Mammary epithelial cell (primary cell): ENCODE measurements at regions of chr1 and their contacts with region 1.

Region 1: DNA sequence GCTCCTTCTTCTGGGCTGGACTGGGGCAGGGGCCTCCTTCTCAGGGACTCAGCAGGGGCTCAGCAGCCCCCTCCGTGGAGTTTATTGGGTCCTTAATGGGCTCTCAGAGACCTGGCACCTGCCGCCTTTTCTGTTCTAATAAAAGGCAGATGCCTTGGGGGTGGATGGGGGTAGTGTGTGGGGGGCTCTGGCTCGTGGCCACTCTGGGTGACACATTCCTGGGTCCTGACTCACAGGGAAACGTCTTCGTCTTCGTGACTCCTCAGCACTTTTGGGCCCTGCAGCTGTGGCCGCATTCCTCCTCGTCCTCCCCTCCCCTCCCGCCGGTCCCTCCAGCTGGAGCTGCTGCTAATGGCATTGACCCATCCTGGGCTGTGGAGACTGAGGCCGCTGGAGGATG is 107.8 kb upstream of the WNT4 start:
- DNase-seq: no peak
- H3K4me3 ChIP-seq: no peak overlapping the region
- H3K27ac ChIP-seq: no peak overlapping the region
- H3K4me1 ChIP-seq: peaks cover 6% of the 10 kb centered on the region
- H3K27me3 ChIP-seq: peaks cover 4% of the 10 kb centered on the region
- CTCF ChIP-seq: no peak

Region 2: GRCh38 chr1:22195802-22196440 is 54.8 kb before region 1 on chr1:
- CTCF ChIA-PET with region 1: no interaction called
- dilution Hi-C with region 1: loop called (anchors 10 kb)
- in situ Hi-C with region 1: no loop called
- intact Hi-C with region 1: no loop called
- DNase-seq: no peak
- H3K4me3 ChIP-seq: no peak overlapping the region
- H3K27ac ChIP-seq: no peak overlapping the region
- H3K4me1 ChIP-seq: no peaks in the 10 kb centered on the region
- H3K27me3 ChIP-seq: no peaks in the 10 kb centered on the region
- CTCF ChIP-seq: no peak